Mammary epithelial cell (primary cell): ENCODE measurements at regions of chr3 and their contacts with region 1.

Region 1: GRCh38 chr3:40584625-40585189 is 59.9 kb downstream of the ZNF621 start:
- DNase-seq: peak; percentile 55
- H3K4me3 ChIP-seq: no peak overlapping the region
- H3K27ac ChIP-seq: no peak overlapping the region
- H3K4me1 ChIP-seq: no peaks in the 10 kb centered on the region
- H3K27me3 ChIP-seq: no peaks in the 10 kb centered on the region
- CTCF ChIP-seq: peak; percentile 89 to 100

Region 2: DNA sequence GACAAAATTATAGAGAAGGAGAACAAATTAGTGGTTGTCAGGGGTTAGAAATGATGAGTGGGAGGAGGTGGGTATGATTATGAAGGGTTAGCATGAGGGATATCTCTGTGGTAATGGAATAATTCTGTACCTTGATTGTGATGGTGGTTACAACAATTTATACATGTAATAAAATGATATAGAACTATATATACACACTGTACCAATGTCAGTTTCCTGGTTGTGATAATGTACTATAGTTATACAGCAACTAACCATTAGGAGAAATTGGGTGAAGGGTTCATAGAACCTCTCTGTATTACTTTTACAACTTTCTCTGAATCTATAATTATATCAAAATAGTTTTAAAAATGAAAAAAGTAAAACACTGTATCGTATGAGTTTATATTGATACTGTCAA is 88.2 kb after region 1 on chr3:
- CTCF ChIA-PET with region 1: no interaction called
- dilution Hi-C with region 1: no loop called
- in situ Hi-C with region 1: no loop called
- intact Hi-C with region 1: loop called (anchors 2 kb)
- DNase-seq: no peak
- H3K4me3 ChIP-seq: no peak overlapping the region
- H3K27ac ChIP-seq: no peak overlapping the region
- H3K4me1 ChIP-seq: no peaks in the 10 kb centered on the region
- H3K27me3 ChIP-seq: no peaks in the 10 kb centered on the region
- CTCF ChIP-seq: no peak

Region 3: GRCh38 chr3:40689837-40690236 is 105.1 kb after region 1 on chr3:
- CTCF ChIA-PET with region 1: no interaction called
- dilution Hi-C with region 1: loop called (anchors 5 kb)
- in situ Hi-C with region 1: no loop called
- intact Hi-C with region 1: no loop called
- DNase-seq: no peak
- H3K4me3 ChIP-seq: no peak overlapping the region
- H3K27ac ChIP-seq: no peak overlapping the region
- H3K4me1 ChIP-seq: peaks cover 9% of the 10 kb centered on the region
- H3K27me3 ChIP-seq: no peaks in the 10 kb centered on the region
- CTCF ChIP-seq: no peak

Region 4: GRCh38 chr3:40847551-40847992 is 262.9 kb after region 1 on chr3:
- CTCF ChIA-PET with region 1: no interaction called
- dilution Hi-C with region 1: no loop called
- in situ Hi-C with region 1: no loop called
- intact Hi-C with region 1: loop called (anchors 10 kb)
- DNase-seq: peak; percentile 12
- H3K4me3 ChIP-seq: no peak overlapping the region
- H3K27ac ChIP-seq: no peak overlapping the region
- H3K4me1 ChIP-seq: peaks cover 11% of the 10 kb centered on the region
- H3K27me3 ChIP-seq: no peaks in the 10 kb centered on the region
- CTCF ChIP-seq: peak; percentile 12 to 25

Region 5: DNA sequence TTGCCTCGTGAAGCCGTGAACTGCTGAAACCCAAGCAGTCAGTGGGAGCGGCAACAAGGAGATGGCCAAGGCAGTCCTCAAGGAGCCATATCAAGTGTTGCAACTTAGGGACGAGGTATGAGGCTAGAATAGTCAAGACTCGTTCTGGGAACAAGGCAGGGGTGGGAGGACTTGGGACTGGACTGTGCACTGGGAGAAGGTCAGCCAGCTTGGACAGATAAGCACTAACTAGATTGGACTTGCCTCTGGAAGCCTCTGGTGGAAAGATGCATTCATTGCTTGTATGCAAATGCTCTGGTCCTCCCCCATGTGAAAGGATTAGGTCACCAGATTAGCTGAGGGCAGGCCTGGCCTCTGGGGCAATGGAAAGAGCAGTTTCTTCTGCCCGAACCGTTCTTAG is 491.3 kb after region 1 on chr3:
- CTCF ChIA-PET with region 1: no interaction called
- dilution Hi-C with region 1: no loop called
- in situ Hi-C with region 1: no loop called
- intact Hi-C with region 1: loop called (anchors 10 kb)
- DNase-seq: peak; percentile 54
- H3K4me3 ChIP-seq: no peak overlapping the region
- H3K27ac ChIP-seq: no peak overlapping the region
- H3K4me1 ChIP-seq: peaks cover 4% of the 10 kb centered on the region
- H3K27me3 ChIP-seq: no peaks in the 10 kb centered on the region
- CTCF ChIP-seq: no peak

Region 6: DNA sequence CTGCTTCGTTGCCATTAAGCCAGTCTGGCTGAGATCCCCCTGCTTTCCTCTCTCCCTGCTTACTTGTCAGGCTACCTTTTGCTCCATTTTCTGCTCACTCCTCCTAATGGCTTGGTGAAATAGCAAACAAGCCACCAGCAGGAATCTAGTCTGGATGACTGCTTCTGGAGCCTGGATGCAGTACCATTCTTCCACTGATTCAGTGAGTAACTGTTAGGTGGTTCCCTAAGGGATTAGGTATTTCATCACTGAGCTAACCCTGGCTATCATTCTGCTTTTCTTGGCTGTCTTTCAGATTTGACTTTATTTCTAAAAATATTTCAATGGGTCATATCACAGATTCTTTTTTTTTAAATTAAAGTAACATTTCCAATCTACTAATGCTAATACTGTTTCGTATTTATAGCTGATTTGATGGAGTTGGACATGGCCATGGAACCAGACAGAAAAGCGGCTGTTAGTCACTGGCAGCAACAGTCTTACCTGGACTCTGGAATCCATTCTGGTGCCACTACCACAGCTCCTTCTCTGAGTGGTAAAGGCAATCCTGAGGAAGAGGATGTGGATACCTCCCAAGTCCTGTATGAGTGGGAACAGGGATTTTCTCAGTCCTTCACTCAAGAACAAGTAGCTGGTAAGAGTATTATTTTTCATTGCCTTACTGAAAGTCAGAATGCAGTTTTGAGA is 639.6 kb after region 1 on chr3:
- CTCF ChIA-PET with region 1: no interaction called
- dilution Hi-C with region 1: no loop called
- in situ Hi-C with region 1: loop called in 1 of 2 experiments (anchors 25 kb)
- intact Hi-C with region 1: loop called (anchors 5 kb)
- DNase-seq: peak; percentile 78
- H3K4me3 ChIP-seq: no peak overlapping the region
- H3K27ac ChIP-seq: no peak overlapping the region
- H3K4me1 ChIP-seq: peaks cover 30% of the 10 kb centered on the region
- H3K27me3 ChIP-seq: no peaks in the 10 kb centered on the region
- CTCF ChIP-seq: no peak

Region 7: GRCh38 chr3:41716471-41716870 is 1131.8 kb after region 1 on chr3:
- CTCF ChIA-PET with region 1: interaction called, 5 read pairs
- dilution Hi-C with region 1: no loop called
- in situ Hi-C with region 1: loop called (anchors 25 kb)
- intact Hi-C with region 1: loop called (anchors 2 kb)
- DNase-seq: no peak
- H3K4me3 ChIP-seq: no peak overlapping the region
- H3K27ac ChIP-seq: no peak overlapping the region
- H3K4me1 ChIP-seq: no peaks in the 10 kb centered on the region
- H3K27me3 ChIP-seq: no peaks in the 10 kb centered on the region
- CTCF ChIP-seq: peak; percentile 36 to 56